ENCODE measurements at regions of chr15 and their contacts with region 1.

Region 1: DNA sequence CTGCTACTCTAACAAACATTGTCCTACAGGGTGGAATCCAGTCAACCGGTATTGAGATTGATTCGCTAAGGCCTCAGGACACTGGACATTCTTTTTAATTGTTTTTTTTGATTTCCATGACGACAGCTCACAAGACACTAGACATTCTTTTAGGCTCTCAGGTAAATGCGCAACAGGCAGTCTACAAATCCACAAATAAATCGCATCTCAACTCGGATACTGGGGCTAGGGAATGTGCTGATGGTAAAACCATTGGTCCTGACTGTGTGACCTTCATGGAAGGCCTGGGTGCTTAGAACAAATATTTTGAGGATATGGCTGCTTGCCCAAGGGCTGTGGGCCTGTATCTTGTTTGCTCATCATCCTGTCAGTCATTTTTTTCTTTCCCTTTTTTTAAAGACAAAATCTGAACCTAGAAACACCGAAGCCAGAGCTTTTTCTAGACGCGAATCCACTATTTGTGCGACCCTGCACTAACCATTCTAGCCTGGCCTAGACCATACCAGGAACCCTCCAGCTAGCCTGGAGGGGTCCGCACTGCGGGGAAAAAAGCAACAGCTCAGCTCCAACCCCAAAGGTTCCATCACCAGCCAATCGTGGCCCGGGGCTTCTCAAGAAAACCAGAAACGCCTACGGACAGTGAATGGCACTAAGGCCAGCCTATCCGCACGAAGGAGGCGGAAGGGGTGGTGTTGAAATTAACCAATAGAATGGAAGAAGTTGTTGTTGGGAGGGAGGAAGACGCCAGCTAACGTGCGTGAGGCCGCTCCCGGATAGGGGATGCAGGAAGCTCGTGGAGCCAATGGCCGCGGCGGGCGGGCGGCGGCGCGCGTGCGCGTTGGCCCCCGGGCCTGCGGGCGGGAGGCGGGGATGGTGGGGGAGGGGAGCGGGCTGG is 18.1 kb upstream of the CHD2 start:
- DNase-seq: peak; percentile 98 to 100 (median 99)
- H3K4me3 ChIP-seq: peak overlapping the region; percentile 30 to 72 (median 47)
- H3K4me3 Mint-ChIP-seq: peak overlapping the region; percentile 84 to 93
- H3K27ac ChIP-seq: peak overlapping the region; percentile 88 to 93
- H3K27ac Mint-ChIP-seq: peak overlapping the region; percentile 98 to 99 (median 99)
- H3K4me1 ChIP-seq: peaks cover 20 to 52% of the 10 kb centered on the region in 2 donors
- H3K4me1 Mint-ChIP-seq: peaks cover 44% of the 10 kb centered on the region
- H3K27me3 ChIP-seq: no peaks in the 10 kb centered on the region
- H3K27me3 Mint-ChIP-seq: no peaks in the 10 kb centered on the region
- CTCF ChIP-seq: no peak

Region 2: DNA sequence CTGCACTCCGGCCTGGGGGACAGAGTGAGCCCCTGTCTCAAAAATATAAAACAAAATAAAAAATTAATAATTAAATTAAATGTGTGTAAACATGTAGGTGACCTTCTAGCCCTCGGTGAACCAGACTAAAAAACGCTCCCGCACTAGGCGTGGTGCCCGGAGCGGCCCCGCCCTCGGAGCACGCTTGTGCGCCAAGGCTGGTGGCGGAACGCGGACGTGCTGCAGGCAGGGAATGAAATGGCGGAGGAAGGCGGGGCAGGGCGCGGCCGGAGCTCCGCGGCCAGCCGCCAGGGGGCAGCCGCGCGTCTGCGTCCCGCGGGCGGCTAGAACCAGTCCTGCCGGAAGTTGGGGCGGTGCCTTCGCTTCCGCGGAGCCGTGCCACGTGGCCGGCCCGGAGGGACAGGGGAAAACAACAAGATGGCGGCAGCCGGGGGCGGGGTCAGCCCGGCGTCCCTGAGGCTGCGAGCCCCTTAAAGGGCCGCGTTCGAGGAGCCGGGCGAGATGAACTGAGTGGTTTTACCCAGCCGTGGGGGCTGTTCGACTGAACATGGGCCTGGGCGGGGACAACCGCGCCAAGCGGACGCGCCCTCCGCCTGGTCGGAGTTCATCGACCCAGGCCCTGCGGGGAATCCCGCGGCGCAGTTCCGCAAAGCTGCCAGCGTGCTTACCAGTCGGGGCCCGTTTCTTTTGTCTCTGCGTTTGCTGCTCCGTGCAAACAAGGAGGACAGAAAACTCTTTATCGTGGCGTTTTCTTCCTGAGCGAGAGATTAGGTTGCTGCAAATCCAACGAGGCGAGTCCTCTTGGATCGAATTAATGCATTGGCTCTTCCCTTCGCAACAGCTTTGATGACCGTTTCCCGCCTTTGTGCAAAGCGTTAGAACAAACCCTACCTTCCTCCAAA is 72.8 kb before region 1 on chr15:
- intact Hi-C with region 1: loop called (anchors 5 kb)
- DNase-seq: peak; percentile 97 to 98 (median 98)
- H3K4me3 ChIP-seq: peak overlapping the region; percentile 59 to 81 (median 63)
- H3K4me3 Mint-ChIP-seq: peak overlapping the region; percentile 82 to 90
- H3K27ac ChIP-seq: peak overlapping the region; percentile 99
- H3K27ac Mint-ChIP-seq: peak overlapping the region; percentile 98 to 100 (median 99)
- H3K4me1 ChIP-seq: peaks cover 59 to 71% of the 10 kb centered on the region in 2 donors
- H3K4me1 Mint-ChIP-seq: peaks cover 53% of the 10 kb centered on the region
- H3K27me3 ChIP-seq: no peaks in the 10 kb centered on the region
- H3K27me3 Mint-ChIP-seq: peaks cover 0 to 1% (median 0%) of the 10 kb centered on the region in 3 donors
- CTCF ChIP-seq: peak; percentile 98

Region 3: DNA sequence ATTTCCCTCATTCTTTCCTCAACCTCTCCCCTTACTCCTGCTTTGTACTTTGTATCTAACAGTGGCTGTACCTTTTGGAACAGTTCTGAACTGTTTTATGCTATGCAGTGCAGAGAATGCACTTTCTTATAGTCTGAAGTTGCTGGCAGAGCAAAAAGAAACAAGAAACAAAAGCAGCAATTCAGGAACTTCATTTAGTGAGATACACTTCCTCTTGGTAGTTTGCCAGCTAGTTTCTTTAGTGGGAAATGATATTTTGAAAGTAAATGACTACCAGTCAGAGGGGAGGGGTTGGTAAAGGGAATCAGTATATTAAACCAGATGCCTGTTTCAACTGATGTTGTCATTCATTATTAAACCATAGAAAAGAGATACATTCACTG is 36.9 kb before region 1 on chr15:
- intact Hi-C with region 1: loop called (anchors 5 kb)
- DNase-seq: peak; percentile 88 to 98 (median 89)
- H3K4me3 ChIP-seq: peak overlapping the region; percentile 1 to 57 (median 27)
- H3K4me3 Mint-ChIP-seq: peak overlapping the region; percentile 37 to 88
- H3K27ac ChIP-seq: peak overlapping the region; percentile 84 to 88
- H3K27ac Mint-ChIP-seq: peak overlapping the region; percentile 90 to 97 (median 95)
- H3K4me1 ChIP-seq: peaks cover 48 to 59% of the 10 kb centered on the region in 2 donors
- H3K4me1 Mint-ChIP-seq: peaks cover 50% of the 10 kb centered on the region
- H3K27me3 ChIP-seq: no peaks in the 10 kb centered on the region
- H3K27me3 Mint-ChIP-seq: peaks cover 0 to 1% (median 0%) of the 10 kb centered on the region in 3 donors
- CTCF ChIP-seq: no peak

Region 4: GRCh38 chr15:92903941-92904831 is 22.1 kb after region 1 on chr15:
- intact Hi-C with region 1: loop called in 1 of 2 experiments (anchors 2 kb)
- DNase-seq: peak; percentile 99
- H3K4me3 ChIP-seq: peak overlapping the region; percentile 77 to 100 (median 98)
- H3K4me3 Mint-ChIP-seq: peak overlapping the region; percentile 88 to 93
- H3K27ac ChIP-seq: peak overlapping the region; percentile 92 to 98
- H3K27ac Mint-ChIP-seq: peak overlapping the region; percentile 99 to 100 (median 100)
- H3K4me1 ChIP-seq: peaks cover 52 to 72% of the 10 kb centered on the region in 2 donors
- H3K4me1 Mint-ChIP-seq: peaks cover 56% of the 10 kb centered on the region
- H3K27me3 ChIP-seq: no peaks in the 10 kb centered on the region
- H3K27me3 Mint-ChIP-seq: peaks cover 0 to 3% (median 0%) of the 10 kb centered on the region in 3 donors
- CTCF ChIP-seq: no peak

Region 5: DNA sequence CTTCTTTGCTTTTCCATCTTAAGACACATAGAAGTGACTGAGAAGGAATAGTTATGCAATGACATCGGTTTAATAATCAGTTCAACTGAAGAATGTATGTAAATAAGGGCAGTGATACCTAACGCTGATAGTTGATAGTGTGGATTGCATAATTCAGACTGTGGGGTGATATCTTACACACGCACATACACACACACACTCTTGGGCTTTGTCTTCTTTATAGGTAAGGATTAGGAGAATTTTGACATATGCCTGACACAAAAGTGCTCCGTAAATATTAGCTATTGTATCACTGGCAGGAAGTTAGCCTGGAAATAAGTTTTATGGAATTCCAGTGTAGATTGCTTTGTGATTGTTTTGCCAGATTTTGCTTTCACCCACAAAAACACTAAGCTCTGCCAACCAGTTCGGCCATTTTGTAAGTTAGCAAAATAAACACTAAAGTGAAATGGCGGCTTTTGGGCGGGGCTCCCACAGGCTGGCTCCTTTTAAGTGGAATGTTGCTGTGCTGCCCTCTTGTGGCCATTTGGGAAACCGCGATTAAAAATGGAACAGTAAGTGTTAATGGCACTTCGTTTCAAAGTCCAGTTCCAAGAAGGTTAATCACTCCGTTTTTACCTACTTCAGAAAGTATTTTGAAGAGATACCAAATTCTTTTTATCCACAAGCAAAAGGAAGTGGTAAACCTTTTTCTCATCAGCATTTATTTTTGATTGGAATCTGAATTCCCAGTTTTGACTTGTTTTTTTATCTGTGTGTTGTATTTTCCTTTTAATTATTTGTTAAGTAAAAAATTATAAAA is 35.8 kb after region 1 on chr15:
- intact Hi-C with region 1: loop called in 1 of 2 experiments (anchors 2 kb)
- DNase-seq: peak; percentile 88 to 96 (median 92)
- H3K4me3 ChIP-seq: peak overlapping the region in 1 of 3 experiments; percentile 38
- H3K4me3 Mint-ChIP-seq: peak overlapping the region in 1 of 2 donors; percentile 53
- H3K27ac ChIP-seq: peak overlapping the region; percentile 42 to 83
- H3K27ac Mint-ChIP-seq: peak overlapping the region; percentile 86 to 93 (median 88)
- H3K4me1 ChIP-seq: peaks cover 67 to 89% of the 10 kb centered on the region in 2 donors
- H3K4me1 Mint-ChIP-seq: peaks cover 76% of the 10 kb centered on the region
- H3K27me3 ChIP-seq: no peaks in the 10 kb centered on the region
- H3K27me3 Mint-ChIP-seq: no peaks in the 10 kb centered on the region
- CTCF ChIP-seq: peak; percentile 90

Measured in CD14-positive monocyte (primary cell).